ENCODE measurements at regions of chr16 and their contacts with region 1.

Region 1: GRCh38 chr16:59899940-59900339 is 1165.8 kb upstream of the GOT2 start:
- DNase-seq: no peak
- H3K4me3 ChIP-seq: no peak overlapping the region
- H3K27ac ChIP-seq: no peak overlapping the region
- H3K4me1 ChIP-seq: no peaks in the 10 kb centered on the region
- H3K27me3 ChIP-seq: no peaks in the 10 kb centered on the region
- CTCF ChIP-seq: no peak
- POLR2A ChIP-seq: no peak

Region 2: DNA sequence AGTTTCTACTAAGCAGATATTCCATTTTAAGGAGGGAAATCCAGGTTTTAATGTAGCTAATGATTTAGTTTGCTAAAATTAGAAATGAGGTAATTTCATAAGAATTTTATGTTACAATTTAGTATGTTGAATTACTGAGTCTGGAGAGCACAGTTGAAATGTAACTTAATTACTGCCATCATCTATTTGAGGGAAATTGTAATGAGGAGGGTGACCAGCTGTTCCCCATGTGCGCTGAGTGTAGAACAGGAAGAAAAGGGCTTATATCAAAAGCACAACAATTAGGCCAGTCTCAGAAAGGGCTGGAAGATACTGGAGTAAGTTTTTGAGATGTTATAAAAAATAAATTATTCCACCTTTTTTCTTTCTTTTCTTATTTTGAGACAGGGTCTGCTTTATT is 430.7 kb before region 1 on chr16:
- intact Hi-C with region 1: no loop called
- DNase-seq: no peak
- H3K4me3 ChIP-seq: no peak overlapping the region
- H3K27ac ChIP-seq: no peak overlapping the region
- H3K4me1 ChIP-seq: no peaks in the 10 kb centered on the region
- H3K27me3 ChIP-seq: no peaks in the 10 kb centered on the region
- CTCF ChIP-seq: no peak
- POLR2A ChIP-seq: no peak

Region 3: DNA sequence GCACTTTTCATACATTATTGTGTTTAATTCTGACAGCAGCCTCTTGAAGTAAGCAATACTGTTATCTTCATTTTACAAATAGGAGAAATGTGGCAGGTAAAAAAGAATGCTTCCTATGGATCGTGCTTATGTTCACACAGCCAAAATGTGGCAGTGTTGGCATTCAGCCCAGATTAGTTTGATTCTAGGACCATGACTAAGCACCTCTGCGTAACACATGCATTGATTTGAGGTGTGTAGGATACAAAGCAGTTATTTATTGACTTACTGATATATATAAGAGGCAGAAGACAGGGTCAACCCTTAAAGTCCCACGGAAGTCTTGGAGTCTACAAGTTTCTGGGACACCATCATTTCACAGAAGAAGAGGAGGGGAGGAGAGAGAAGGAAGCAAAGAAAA is 21.5 kb before region 1 on chr16:
- intact Hi-C with region 1: loop called (anchors 2 kb)
- DNase-seq: no peak
- H3K4me3 ChIP-seq: no peak overlapping the region
- H3K27ac ChIP-seq: no peak overlapping the region
- H3K4me1 ChIP-seq: no peaks in the 10 kb centered on the region
- H3K27me3 ChIP-seq: no peaks in the 10 kb centered on the region
- CTCF ChIP-seq: no peak
- POLR2A ChIP-seq: no peak

Region 4: DNA sequence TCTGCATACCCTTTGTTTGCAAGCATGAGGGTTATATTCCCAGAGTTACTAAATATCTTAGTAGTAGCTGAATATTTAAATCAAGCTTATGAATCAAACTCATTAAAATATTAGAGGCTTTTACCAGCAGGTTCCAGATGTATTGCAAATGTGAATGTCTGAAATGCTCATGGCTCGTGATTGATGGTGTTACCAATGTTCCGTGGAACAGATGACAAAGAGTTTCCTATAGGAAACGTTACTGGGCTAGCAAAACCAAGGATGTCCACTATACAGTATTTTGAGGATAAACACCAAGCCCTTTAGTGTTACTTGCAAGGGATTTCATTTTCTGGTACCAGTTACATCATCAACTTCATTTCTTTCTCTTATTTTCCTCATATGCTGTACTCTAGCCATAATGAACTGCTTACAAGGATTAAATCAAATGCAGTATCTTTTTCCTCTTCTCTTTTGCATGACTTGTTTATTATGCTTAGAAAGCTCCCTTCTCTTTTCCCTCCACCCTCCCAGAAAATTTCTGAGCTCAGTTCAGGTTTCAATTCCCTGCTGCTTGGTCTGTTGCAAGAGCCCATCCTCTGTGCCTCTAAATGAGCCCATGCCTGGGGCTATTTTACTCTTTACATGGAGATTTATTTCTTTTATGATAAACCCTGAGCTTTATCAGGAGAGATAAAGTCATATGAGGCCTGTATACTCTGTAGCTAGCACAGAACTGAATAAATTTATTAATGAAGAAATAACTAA is 371.3 kb after region 1 on chr16:
- intact Hi-C with region 1: no loop called
- DNase-seq: no peak
- H3K4me3 ChIP-seq: no peak overlapping the region
- H3K27ac ChIP-seq: no peak overlapping the region
- H3K4me1 ChIP-seq: no peaks in the 10 kb centered on the region
- H3K27me3 ChIP-seq: no peaks in the 10 kb centered on the region
- CTCF ChIP-seq: no peak
- POLR2A ChIP-seq: no peak

Measured in testis (tissue), 5 donors.